CD8-positive, alpha-beta T cell (primary cell): ENCODE measurements at regions of chr6 and their contacts with region 1.

Region 1: DNA sequence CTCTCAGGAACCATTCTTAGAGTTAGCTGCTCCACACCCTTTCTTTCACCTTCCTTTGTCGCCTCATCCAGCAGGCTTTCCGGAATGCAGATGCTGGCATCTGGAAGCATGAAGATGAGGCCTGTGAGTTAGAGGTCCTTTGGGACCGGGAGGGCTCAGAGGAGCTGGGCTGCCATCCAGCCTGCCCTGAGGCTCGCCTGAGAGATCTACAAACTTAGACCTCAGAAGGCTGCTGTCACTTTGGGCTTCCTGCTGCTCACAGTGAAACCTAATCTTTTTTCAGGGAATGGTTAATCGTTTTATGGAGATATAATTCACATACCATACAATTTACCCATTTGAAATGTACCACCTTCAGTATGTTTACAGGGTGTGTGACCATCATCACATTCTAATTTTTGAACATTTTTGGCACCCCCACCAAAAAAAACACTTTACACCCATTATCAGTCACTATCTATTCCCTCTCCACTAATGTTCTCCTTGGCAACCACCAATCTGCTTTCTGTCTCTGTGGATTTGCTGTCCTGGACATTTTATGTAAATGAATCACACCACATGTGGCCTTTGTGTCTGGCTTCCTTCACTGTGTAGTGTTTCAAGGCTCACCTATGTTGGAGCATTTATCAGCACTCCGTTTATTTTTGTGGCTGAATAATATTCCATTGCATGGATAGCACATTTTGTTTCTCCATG is 20.0 kb upstream of the MPC1 start:
- DNase-seq: no peak
- ATAC-seq: no peak
- H3K4me3 ChIP-seq: no peak overlapping the region
- H3K4me3 Mint-ChIP-seq: no peak overlapping the region
- H3K27ac ChIP-seq: no peak overlapping the region
- H3K27ac Mint-ChIP-seq: no peak overlapping the region
- H3K4me1 ChIP-seq: no peaks in the 10 kb centered on the region
- H3K4me1 Mint-ChIP-seq: peaks cover 6% of the 10 kb centered on the region
- H3K27me3 ChIP-seq: no peaks in the 10 kb centered on the region
- H3K27me3 Mint-ChIP-seq: no peaks in the 10 kb centered on the region
- CTCF ChIP-seq: no peak

Region 2: DNA sequence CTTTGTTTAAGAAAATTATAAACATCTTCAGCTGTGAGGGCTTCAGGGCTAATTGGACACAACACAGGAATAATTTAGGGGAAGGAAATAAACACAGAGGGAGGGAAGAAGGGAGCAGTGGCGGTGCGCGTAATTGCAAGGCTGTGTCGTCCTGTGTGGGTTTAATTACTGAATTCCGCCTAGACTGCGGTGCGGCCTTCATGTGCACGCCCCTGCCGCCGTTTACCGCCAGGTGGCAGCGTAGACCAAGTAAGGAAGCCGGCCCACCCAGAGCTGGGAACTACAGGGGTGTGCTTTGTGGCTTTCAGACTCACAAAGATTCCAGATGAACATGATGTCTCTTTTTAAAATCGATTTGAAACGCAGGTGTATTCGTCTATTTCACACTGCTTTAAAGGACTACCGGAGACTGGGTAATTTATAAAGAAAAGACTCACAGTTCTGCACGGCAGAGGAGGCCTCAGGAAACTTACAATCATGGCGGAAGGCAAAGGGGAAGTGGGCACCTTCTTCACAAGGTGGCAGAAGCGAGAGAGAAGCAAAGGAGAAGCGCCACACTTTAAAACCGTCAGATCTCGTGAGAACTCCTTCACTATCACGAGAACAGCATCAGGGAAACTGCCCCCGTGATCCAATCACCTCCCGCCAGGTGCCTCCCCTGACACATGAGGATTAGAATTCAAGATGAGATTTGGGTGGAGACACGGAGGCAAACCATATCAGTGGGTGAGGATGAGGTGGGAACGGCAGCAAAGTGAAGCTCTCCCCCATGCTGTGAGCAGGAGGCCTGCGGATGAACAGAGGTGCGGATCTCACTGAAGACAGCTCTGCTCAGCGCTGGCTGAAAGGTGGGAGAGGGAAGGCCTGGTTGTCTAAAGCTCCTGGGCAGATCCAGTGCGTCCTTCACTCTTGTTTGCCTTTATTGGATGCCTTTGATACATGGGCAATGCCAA is 517.6 kb before region 1 on chr6:
- CTCF ChIA-PET with region 1: interaction called, 4 read pairs
- POLR2A ChIA-PET with region 1: no interaction called
- intact Hi-C with region 1: loop called in 1 of 2 experiments (anchors 2 kb)
- DNase-seq: peak; percentile 43 to 76 (median 66)
- ATAC-seq: peak; percentile 96
- H3K4me3 ChIP-seq: no peak overlapping the region
- H3K4me3 Mint-ChIP-seq: peak overlapping the region; percentile 76
- H3K27ac ChIP-seq: no peak overlapping the region
- H3K27ac Mint-ChIP-seq: peak overlapping the region; percentile 27
- H3K4me1 ChIP-seq: no peaks in the 10 kb centered on the region
- H3K4me1 Mint-ChIP-seq: peaks cover 15% of the 10 kb centered on the region
- H3K27me3 ChIP-seq: peaks cover 0 to 2% of the 10 kb centered on the region in 2 experiments
- H3K27me3 Mint-ChIP-seq: peaks cover 6% of the 10 kb centered on the region
- CTCF ChIP-seq: peak; percentile 74

Region 3: GRCh38 chr6:166228839-166229528 is 173.7 kb before region 1 on chr6:
- CTCF ChIA-PET with region 1: no interaction called
- POLR2A ChIA-PET with region 1: no interaction called
- intact Hi-C with region 1: no loop called
- DNase-seq: no peak
- ATAC-seq: peak; percentile 40
- H3K4me3 ChIP-seq: no peak overlapping the region
- H3K4me3 Mint-ChIP-seq: peak overlapping the region; percentile 55
- H3K27ac ChIP-seq: no peak overlapping the region
- H3K27ac Mint-ChIP-seq: no peak overlapping the region
- H3K4me1 ChIP-seq: peaks cover 8% of the 10 kb centered on the region
- H3K4me1 Mint-ChIP-seq: peaks cover 30% of the 10 kb centered on the region
- H3K27me3 ChIP-seq: peaks cover 0 to 6% of the 10 kb centered on the region in 2 experiments
- H3K27me3 Mint-ChIP-seq: peaks cover 5% of the 10 kb centered on the region
- CTCF ChIP-seq: no peak

Region 4: DNA sequence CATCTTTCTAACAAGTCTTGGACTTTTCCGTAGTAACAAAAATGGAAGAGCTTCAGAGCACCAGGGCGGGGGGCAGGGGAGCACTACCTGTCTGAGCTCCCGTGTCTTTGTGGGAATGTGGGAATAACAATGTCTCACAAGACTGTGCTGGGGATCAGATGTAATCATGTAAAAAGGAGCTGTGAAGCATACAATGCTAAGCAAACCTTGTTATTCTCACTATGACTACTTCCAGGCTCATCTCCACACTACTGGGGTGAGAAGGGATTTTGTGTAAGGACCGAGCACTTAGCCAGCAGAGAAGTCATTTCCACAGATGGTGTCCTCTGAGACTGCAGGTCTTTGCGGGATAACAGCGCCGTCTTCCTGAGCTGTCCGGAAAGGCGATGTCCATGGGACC is 121.6 kb before region 1 on chr6:
- CTCF ChIA-PET with region 1: interaction called, 38 read pairs
- POLR2A ChIA-PET with region 1: no interaction called
- intact Hi-C with region 1: no loop called
- DNase-seq: no peak
- ATAC-seq: no peak
- H3K4me3 ChIP-seq: no peak overlapping the region
- H3K4me3 Mint-ChIP-seq: no peak overlapping the region
- H3K27ac ChIP-seq: no peak overlapping the region
- H3K27ac Mint-ChIP-seq: no peak overlapping the region
- H3K4me1 ChIP-seq: peaks cover under 1% of the 10 kb centered on the region
- H3K4me1 Mint-ChIP-seq: no peaks in the 10 kb centered on the region
- H3K27me3 ChIP-seq: no peaks in the 10 kb centered on the region
- H3K27me3 Mint-ChIP-seq: peaks cover 3% of the 10 kb centered on the region
- CTCF ChIP-seq: no peak

Region 5: DNA sequence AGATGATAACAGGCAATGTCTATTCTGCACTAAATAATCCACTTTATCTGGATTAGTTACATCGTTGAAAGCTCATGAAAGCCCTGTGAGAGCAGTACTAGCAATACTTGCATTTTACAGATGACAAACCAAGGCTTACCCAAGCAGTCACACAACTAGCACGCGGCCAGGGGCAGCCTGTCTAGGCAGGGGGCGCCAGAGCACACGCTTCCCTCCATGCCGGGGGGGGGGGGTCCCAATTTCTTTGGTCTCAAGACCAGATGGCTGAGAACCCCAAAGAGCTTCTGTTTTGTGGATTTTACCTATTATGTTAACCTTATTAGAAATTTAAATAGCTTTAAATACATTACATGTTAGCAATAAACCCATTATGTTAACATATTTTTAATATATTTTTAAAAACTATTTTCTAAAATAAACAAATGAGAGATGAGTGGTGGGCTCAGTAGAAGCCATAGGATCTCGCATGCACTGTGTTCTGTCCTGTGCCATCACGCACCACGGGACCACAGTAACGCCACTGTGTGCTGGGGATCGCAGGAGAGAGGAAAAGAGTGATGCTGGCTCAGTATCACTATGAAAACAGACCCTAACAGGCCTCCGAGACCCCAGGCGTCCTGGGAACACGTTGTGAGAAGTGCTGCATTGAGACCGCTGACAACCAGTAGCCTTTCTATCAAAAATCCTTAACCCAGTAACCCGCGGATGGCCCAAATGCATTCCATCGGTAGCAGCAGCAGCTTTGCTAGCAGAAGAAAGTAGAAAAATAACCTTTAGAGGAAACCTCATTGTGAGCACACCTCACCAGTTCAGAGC is 89.3 kb before region 1 on chr6:
- CTCF ChIA-PET with region 1: interaction called, 83 read pairs
- POLR2A ChIA-PET with region 1: no interaction called
- intact Hi-C with region 1: loop called (anchors 1 kb)
- DNase-seq: peak in 8 of 9 experiments; percentile 18 to 76 (median 58)
- ATAC-seq: peak; percentile 98
- H3K4me3 ChIP-seq: no peak overlapping the region
- H3K4me3 Mint-ChIP-seq: no peak overlapping the region
- H3K27ac ChIP-seq: no peak overlapping the region
- H3K27ac Mint-ChIP-seq: no peak overlapping the region
- H3K4me1 ChIP-seq: peaks cover under 1% of the 10 kb centered on the region
- H3K4me1 Mint-ChIP-seq: no peaks in the 10 kb centered on the region
- H3K27me3 ChIP-seq: peaks cover 0 to 2% of the 10 kb centered on the region in 2 experiments
- H3K27me3 Mint-ChIP-seq: peaks cover 18% of the 10 kb centered on the region
- CTCF ChIP-seq: peak; percentile 61

Region 6: DNA sequence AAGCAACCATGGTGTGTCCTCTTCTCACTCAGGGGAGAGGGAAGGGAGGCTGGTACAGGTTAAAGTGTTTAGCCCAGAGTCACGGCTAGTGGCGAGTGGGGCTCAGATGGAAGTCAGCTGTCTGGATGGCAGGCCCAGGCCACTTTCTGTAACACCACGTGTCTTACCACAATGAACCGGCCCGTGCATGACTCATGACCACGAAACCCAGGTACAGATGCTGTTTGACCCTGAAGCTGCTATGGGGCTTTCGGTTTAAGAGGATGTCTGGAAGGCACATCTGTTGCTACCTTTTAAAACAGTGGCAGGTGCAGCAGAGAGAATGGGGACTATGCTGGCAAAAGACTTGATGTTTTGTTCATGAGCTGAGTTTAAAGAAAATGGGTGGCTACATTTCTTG is 16.6 kb after region 1 on chr6:
- CTCF ChIA-PET with region 1: interaction called, 20 read pairs
- POLR2A ChIA-PET with region 1: no interaction called
- intact Hi-C with region 1: loop called in 1 of 2 experiments (anchors 2 kb)
- DNase-seq: peak in 8 of 9 experiments; percentile 50 to 82 (median 72)
- ATAC-seq: peak; percentile 35
- H3K4me3 ChIP-seq: no peak overlapping the region
- H3K4me3 Mint-ChIP-seq: peak overlapping the region; percentile 50
- H3K27ac ChIP-seq: peak overlapping the region; percentile 15 to 58
- H3K27ac Mint-ChIP-seq: peak overlapping the region; percentile 92
- H3K4me1 ChIP-seq: peaks cover 62% of the 10 kb centered on the region
- H3K4me1 Mint-ChIP-seq: peaks cover 75% of the 10 kb centered on the region
- H3K27me3 ChIP-seq: no peaks in the 10 kb centered on the region
- H3K27me3 Mint-ChIP-seq: no peaks in the 10 kb centered on the region
- CTCF ChIP-seq: no peak

Region 7: GRCh38 chr6:166435574-166435973 is 32.8 kb after region 1 on chr6:
- CTCF ChIA-PET with region 1: interaction called, 26 read pairs
- POLR2A ChIA-PET with region 1: interaction called, 3 read pairs
- intact Hi-C with region 1: no loop called
- DNase-seq: peak; percentile 26 to 84 (median 60)
- ATAC-seq: peak; percentile 88
- H3K4me3 ChIP-seq: no peak overlapping the region
- H3K4me3 Mint-ChIP-seq: peak overlapping the region; percentile 29
- H3K27ac ChIP-seq: no peak overlapping the region
- H3K27ac Mint-ChIP-seq: peak overlapping the region; percentile 88
- H3K4me1 ChIP-seq: peaks cover 22% of the 10 kb centered on the region
- H3K4me1 Mint-ChIP-seq: peaks cover 29% of the 10 kb centered on the region
- H3K27me3 ChIP-seq: no peaks in the 10 kb centered on the region
- H3K27me3 Mint-ChIP-seq: no peaks in the 10 kb centered on the region
- CTCF ChIP-seq: peak; percentile 35

Region 8: GRCh38 chr6:166512567-166512966 is 109.8 kb after region 1 on chr6:
- CTCF ChIA-PET with region 1: interaction called, 7 read pairs
- POLR2A ChIA-PET with region 1: no interaction called
- intact Hi-C with region 1: loop called in 1 of 2 experiments (anchors 5 kb)
- DNase-seq: peak; percentile 12 to 72 (median 42)
- ATAC-seq: peak; percentile 94
- H3K4me3 ChIP-seq: no peak overlapping the region
- H3K4me3 Mint-ChIP-seq: no peak overlapping the region
- H3K27ac ChIP-seq: no peak overlapping the region
- H3K27ac Mint-ChIP-seq: peak overlapping the region; percentile 4
- H3K4me1 ChIP-seq: no peaks in the 10 kb centered on the region
- H3K4me1 Mint-ChIP-seq: peaks cover 8% of the 10 kb centered on the region
- H3K27me3 ChIP-seq: no peaks in the 10 kb centered on the region
- H3K27me3 Mint-ChIP-seq: no peaks in the 10 kb centered on the region
- CTCF ChIP-seq: no peak

Region 9: DNA sequence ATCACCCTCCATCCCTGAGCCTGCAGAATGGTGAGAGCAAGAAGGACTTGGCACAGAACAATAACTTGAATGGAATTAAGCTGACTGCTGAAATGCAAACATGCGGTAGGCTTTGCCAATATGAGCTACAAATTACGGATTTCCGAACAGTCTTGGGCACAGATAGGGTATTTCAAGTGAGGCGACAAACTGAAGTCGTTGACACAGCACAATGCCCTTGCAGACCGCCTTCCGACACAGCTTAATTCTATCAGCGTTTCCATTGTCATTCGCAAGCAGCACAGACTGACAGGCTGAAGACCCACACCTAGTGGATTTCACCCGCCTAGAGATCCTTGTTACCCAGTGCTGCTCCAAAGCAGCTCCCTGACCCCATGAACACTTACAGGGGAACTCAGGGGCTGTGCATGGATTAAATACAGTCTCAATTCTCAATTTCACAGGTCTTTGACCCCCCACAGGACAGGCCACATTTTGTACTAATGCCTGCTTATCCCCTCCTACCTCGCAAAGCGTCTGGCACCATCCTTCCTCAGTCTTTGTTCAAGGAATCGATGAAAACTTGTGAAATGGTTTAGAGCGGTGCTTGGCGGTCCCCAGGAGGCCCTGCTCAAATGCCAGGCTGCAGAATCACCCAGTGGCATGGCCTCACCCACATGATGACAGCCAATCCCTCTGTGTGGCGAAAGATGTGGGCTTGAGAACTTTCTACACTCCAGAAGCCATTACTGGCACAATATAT is 149.2 kb after region 1 on chr6:
- CTCF ChIA-PET with region 1: no interaction called
- POLR2A ChIA-PET with region 1: no interaction called
- intact Hi-C with region 1: no loop called
- DNase-seq: no peak
- ATAC-seq: no peak
- H3K4me3 ChIP-seq: no peak overlapping the region
- H3K4me3 Mint-ChIP-seq: no peak overlapping the region
- H3K27ac ChIP-seq: no peak overlapping the region
- H3K27ac Mint-ChIP-seq: no peak overlapping the region
- H3K4me1 ChIP-seq: no peaks in the 10 kb centered on the region
- H3K4me1 Mint-ChIP-seq: peaks cover 2% of the 10 kb centered on the region
- H3K27me3 ChIP-seq: no peaks in the 10 kb centered on the region
- H3K27me3 Mint-ChIP-seq: peaks cover 15% of the 10 kb centered on the region
- CTCF ChIP-seq: no peak